Esophagus muscularis mucosa (tissue), 4 donors: ENCODE measurements at regions of chr19 and their contacts with region 1.

Region 1: GRCh38 chr19:38849860-38850435 is at the start of gene HNRNPL:
- DNase-seq: no peak
- H3K4me3 ChIP-seq: peak within 1 kb of the TSS; percentile 90 to 98 (median 96)
- H3K27ac ChIP-seq: peak within 1 kb of the TSS; percentile 100
- H3K4me1 ChIP-seq: peaks cover 45 to 64% (median 55%) of the 10 kb centered on the region in 4 donors
- H3K27me3 ChIP-seq: no peaks in the 10 kb centered on the region
- CTCF ChIP-seq: peak; percentile 20 to 45 (median 34)
- EP300 ChIP-seq: no peak
- POLR2A ChIP-seq: peak; percentile 98
- total RNA-seq, gene HNRNPL: 126 to 202 (median 180) TPM

Region 2: DNA sequence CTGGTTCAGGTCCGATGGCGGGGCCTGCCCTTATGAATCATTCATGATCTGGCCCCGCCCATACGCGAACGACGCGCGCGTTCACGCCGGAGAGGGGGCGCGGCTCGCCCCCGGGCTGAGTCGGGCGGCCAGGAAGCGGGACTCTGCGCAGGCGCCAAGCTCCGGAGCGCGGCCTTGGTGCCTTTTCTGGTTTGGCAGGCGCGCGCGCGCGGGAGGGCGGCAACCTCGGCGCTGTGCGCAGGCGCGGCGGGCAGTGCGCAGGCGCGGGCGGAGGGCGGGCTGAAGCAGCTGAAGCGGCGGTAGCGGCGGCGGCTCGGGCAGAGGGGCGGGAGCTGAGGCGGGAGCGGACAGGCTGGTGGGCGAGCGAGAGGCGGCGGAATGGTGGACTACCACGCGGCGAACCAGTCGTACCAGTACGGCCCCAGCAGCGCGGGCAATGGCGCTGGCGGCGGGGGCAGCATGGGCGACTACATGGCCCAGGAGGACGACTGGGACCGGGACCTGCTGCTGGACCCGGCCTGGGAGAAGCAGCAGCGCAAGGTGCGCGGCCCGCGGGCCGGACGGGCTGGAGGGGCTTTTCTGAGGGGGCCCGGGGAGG is 202.5 kb before region 1 on chr19 and contains the start of gene ACTN4:
- intact Hi-C with region 1: loop called (anchors 5 kb)
- DNase-seq: peak; percentile 99
- H3K4me3 ChIP-seq: peak within 1 kb of the TSS; percentile 97 to 100 (median 98)
- H3K27ac ChIP-seq: peak within 1 kb of the TSS; percentile 92 to 99 (median 98)
- H3K4me1 ChIP-seq: peaks cover 33 to 41% (median 39%) of the 10 kb centered on the region in 4 donors
- H3K27me3 ChIP-seq: no peaks in the 10 kb centered on the region
- CTCF ChIP-seq: peak in 1 of 3 experiments; percentile 38
- EP300 ChIP-seq: no peak
- POLR2A ChIP-seq: peak; percentile 96
- total RNA-seq, gene ACTN4: 416 to 816 (median 598) TPM

Region 3: DNA sequence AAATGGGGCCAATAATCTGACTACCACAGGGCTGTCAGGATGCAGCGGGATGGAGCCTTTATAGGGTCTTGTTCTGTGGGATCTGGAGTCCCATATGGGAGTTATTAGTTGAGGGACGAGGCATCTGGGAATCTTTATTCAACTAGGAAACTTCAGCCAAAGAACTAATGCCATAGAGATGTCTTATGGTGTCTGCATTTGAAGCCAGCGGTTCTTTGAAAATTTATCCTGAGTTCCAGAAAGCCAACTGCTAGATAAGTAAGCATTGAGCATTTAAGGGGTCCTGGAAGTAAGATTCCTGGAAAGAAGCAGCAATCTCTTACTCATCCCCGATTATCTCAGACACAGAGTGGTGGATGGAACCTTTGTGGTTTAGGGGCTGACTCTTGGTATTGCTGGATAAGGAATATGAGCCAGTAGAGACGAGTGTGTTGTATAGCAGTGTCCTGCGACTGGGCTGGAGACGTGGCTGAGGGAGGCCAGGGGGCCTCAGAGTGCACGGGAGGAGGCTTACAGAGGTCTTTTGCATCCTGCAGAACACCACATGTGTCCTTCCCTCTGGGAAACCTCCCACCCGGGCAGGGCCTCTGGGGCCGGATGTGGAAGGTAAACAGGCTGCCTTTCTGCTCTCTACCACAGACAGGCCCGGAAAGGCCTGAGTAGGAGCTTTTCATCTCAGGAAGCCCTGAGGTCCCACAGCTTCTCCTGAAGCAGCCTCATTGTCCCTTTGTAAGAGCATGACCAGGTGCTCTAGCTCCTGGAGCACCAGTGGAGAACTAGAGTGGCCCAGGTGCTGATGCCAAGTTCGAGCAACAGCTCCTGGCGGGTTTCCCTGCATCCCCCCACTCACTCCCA is 173.7 kb before region 1 on chr19:
- intact Hi-C with region 1: no loop called
- DNase-seq: no peak
- H3K4me3 ChIP-seq: peak overlapping the region in 1 of 4 donors; percentile 7
- H3K27ac ChIP-seq: peak overlapping the region; percentile 87 to 98 (median 96)
- H3K4me1 ChIP-seq: peaks cover 89 to 97% (median 95%) of the 10 kb centered on the region in 4 donors
- H3K27me3 ChIP-seq: no peaks in the 10 kb centered on the region
- CTCF ChIP-seq: no peak
- EP300 ChIP-seq: no peak
- POLR2A ChIP-seq: no peak

Region 4: DNA sequence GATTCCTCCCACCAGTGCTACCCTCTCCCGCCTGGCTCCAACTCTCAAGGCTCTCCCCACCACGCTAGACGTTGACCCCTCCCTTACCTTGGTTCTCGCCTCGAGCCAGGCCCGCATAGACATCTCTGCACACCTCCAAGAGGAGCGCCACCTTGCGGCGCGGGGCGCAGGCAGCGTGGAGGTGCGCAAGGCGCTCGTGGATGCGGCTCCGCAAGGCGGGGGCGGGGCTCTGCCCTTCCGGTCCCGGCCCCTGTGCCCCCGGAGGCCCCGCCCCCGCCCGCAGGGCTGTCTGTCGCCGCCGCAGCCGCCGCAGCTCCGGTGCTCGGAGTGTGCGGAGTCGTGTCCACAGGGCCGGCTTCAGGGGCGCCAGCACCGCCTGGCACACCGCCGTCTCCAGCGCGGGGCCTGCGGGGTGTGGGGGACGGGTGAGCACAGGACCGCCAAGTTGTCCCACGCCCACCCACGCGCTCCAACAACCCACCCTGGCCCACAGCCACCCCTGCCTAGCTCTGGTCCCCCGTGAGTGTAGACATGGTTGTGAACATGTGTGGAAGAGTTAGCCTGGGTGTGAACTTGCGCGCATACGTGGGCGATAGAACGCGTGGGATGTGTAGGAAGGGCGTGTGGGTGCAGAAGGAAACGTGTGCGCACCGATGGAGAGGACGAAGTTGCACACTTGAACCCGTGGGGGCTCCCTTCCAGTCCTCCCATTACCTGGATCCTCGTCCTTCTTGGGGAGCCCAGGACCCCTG is 20.1 kb after region 1 on chr19:
- intact Hi-C with region 1: loop called (anchors 2 kb)
- DNase-seq: no peak
- H3K4me3 ChIP-seq: peak overlapping the region; percentile 57 to 61 (median 58)
- H3K27ac ChIP-seq: peak overlapping the region; percentile 45 to 70 (median 63)
- H3K4me1 ChIP-seq: peaks cover 16 to 22% (median 20%) of the 10 kb centered on the region in 4 donors
- H3K27me3 ChIP-seq: peaks cover 0 to 4% (median 0%) of the 10 kb centered on the region in 4 donors
- CTCF ChIP-seq: peak; percentile 80 to 94 (median 84)
- EP300 ChIP-seq: no peak
- POLR2A ChIP-seq: no peak

Region 5: DNA sequence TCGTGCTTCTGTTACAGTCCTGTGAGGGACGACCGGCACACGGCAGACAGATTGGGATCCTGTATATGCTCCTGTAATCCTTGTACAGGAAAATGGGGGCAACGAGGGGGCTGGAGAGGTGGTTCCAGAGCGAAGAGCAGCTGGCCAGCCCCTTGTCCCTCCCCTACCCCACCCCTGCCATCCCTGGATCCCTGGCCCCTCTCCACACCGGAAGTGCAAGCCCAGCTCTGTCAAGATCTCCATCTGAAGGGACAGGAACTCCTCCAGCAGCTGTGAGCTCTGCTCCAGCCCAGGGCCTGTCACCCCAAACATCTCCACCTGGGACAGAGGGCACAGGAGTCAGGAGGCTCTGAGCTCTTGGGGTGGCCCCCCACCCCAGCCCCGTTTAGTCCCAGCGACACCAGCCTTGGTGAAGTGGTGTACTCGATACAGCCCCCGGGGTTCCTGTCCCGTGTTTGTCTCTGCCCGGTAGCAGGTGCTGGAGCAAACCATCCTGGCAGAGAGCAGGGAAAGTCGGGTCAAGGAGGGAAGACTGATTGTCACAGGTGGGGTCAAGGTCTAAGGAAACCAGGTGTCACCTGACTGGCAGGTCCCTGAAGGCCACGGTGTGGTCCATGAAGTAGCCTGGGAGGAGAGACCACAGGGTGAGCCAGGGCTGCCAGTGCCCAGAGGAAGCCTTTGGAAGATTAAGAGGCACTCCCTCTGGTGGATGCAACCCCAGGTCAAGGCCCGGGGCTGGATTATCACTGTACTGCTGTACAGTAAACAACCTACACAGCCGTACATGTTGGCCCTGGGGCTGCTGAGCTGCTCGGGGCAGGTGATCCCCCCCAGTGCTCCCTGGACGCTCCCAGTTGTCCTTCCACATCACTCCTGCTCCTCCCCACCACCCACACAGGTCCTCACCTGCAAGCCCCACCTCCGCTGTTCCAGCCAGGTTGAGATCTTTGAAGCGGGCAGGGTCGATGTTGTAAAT is 67.9 kb after region 1 on chr19:
- intact Hi-C with region 1: no loop called
- DNase-seq: no peak
- H3K4me3 ChIP-seq: no peak overlapping the region
- H3K27ac ChIP-seq: no peak overlapping the region
- H3K4me1 ChIP-seq: no peaks in the 10 kb centered on the region
- H3K27me3 ChIP-seq: no peaks in the 10 kb centered on the region
- CTCF ChIP-seq: no peak
- EP300 ChIP-seq: no peak
- POLR2A ChIP-seq: no peak